ENCODE measurements at regions of chrX and their contacts with region 1.

Region 1: GRCh38 chrX:141278302-141278701 is 36.0 kb upstream of the SPANXC start:
- DNase-seq: no peak
- H3K4me3 ChIP-seq: no peak overlapping the region
- H3K27ac ChIP-seq: no peak overlapping the region
- H3K4me1 ChIP-seq: no peaks in the 10 kb centered on the region
- H3K27me3 ChIP-seq: no peaks in the 10 kb centered on the region
- CTCF ChIP-seq: peak in 9 of 11 experiments; percentile 15 to 55 (median 40)
- POLR2A ChIP-seq: no peak

Region 2: GRCh38 chrX:140762061-140762460 is 516.2 kb before region 1 on chrX:
- intact Hi-C with region 1: loop called (anchors 10 kb)
- DNase-seq: no peak
- H3K4me3 ChIP-seq: no peak overlapping the region
- H3K27ac ChIP-seq: no peak overlapping the region
- H3K4me1 ChIP-seq: peaks cover 0 to 6% (median 0%) of the 10 kb centered on the region in 6 donors
- H3K27me3 ChIP-seq: peaks cover 0 to 33% (median 19%) of the 10 kb centered on the region in 7 donors
- CTCF ChIP-seq: peak; percentile 14 to 67 (median 43)
- POLR2A ChIP-seq: no peak

Region 3: DNA sequence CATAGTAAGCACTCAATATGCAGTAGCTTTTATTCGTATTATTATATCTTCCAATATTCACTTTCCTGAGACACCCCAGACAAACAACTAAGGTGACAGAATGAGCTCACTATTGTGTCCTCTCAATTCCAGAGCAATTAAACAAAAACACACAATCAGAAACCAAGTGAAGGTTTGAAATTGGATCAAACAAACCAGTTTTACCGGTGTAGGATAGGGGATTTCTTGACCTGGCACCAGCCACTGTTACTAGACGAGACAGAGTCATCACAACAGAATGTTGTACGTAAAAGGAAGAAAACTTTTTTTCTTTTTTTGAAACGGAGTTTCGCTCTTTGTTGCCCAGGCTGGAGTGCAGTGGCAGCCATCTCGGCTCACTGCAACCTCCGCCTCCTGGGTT is 145.1 kb before region 1 on chrX:
- intact Hi-C with region 1: no loop called
- DNase-seq: no peak
- H3K4me3 ChIP-seq: no peak overlapping the region
- H3K27ac ChIP-seq: no peak overlapping the region
- H3K4me1 ChIP-seq: no peaks in the 10 kb centered on the region
- H3K27me3 ChIP-seq: peaks cover 0 to 5% (median 0%) of the 10 kb centered on the region in 7 donors
- CTCF ChIP-seq: no peak
- POLR2A ChIP-seq: no peak

Measured in spleen (tissue), 13 donors.